ENCODE measurements at regions of chr15 and their contacts with region 1.

Region 1: DNA sequence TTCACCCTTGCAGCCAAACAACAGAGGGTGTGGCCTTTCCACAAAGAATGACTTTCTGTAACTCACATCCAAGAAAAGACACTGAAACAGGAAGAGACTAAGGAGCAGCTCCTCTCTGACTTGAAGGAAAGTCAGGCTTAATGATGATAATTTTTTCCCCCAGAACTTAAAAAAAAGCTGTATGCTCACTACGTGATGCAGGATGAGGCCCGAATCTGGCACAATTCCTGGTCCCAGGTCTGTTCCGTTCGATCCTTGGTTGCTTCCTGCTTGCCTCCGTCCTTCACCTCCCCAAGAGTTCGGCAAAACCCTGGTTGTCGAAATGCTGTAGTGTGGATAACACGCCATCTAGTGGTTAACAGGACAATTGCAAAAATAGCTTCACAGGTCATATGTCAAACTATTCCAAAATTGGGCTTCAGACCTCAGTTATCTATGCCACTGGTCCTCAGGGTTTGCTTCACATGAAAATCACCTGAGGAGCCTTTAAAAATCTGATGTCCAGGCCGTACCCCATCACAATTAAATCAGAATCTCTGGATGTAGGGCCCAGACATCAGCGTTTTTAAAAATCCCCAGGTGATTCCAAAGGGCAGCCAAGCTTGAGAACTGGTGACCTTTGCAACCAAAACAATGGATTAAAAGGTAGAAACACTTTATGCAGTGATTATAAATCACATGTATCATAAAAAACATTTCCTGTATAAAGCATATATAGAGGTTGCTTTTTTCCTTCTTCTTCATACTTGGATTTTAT is 28.1 kb upstream of the SYNM start:
- DNase-seq: peak; percentile 74
- ATAC-seq: peak; percentile 90
- H3K4me3 ChIP-seq: peak overlapping the region; percentile 46
- H3K27ac ChIP-seq: peak overlapping the region; percentile 47
- H3K4me1 ChIP-seq: peaks cover 7% of the 10 kb centered on the region
- H3K27me3 ChIP-seq: no peaks in the 10 kb centered on the region
- CTCF ChIP-seq: peak; percentile 82 to 94 (median 93)
- EP300 ChIP-seq: no peak
- POLR2A ChIP-seq: no peak
- RAD21 ChIP-seq: peak; percentile 99

Region 2: DNA sequence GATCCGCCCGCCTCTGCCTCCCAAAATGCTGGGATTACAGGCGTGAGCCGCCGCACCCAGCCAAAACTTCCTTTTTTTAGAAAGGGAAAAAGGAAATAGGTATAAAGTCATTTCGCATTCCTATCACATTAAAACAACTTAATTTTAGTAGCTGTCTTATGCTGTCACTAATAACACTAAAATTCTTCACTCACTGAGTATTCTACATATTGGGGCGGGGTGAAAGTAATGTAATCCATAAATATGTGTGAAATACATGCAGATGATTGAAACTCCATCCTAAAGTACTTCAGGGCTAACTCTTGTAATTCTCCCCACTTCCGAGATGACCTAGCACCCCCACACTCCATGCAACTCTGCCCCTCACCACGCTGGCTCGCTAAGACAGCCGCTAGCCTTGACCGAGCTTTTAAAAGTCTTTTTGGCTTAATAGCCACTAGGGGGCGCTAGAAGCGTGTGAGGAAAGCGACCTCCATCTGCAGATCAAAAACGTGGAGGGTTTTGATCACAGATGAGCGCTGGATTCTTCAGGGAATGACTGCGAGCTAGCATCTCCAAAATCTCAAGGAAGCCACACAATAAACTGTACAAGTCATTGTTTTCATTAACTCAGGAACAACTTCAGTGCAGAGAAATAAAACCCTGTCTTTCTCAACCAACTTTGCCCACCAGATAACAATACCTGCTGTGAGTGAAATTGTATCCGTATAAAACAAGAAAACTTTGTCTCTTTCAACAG is 557.7 kb before region 1 on chr15:
- CTCF ChIA-PET with region 1: interaction called, 55 read pairs
- POLR2A ChIA-PET with region 1: no interaction called
- RAD21 ChIA-PET with region 1: interaction called, 18 read pairs
- SMC1A ChIA-PET with region 1: interaction called, 32 read pairs
- in situ Hi-C with region 1: no loop called
- intact Hi-C with region 1: loop called (anchors 1 kb)
- DNase-seq: no peak
- ATAC-seq: peak; percentile 95
- H3K4me3 ChIP-seq: no peak overlapping the region
- H3K27ac ChIP-seq: no peak overlapping the region
- H3K4me1 ChIP-seq: no peaks in the 10 kb centered on the region
- H3K27me3 ChIP-seq: no peaks in the 10 kb centered on the region
- CTCF ChIP-seq: peak; percentile 64 to 75 (median 68)
- EP300 ChIP-seq: no peak
- POLR2A ChIP-seq: no peak
- RAD21 ChIP-seq: peak; percentile 75

Region 3: DNA sequence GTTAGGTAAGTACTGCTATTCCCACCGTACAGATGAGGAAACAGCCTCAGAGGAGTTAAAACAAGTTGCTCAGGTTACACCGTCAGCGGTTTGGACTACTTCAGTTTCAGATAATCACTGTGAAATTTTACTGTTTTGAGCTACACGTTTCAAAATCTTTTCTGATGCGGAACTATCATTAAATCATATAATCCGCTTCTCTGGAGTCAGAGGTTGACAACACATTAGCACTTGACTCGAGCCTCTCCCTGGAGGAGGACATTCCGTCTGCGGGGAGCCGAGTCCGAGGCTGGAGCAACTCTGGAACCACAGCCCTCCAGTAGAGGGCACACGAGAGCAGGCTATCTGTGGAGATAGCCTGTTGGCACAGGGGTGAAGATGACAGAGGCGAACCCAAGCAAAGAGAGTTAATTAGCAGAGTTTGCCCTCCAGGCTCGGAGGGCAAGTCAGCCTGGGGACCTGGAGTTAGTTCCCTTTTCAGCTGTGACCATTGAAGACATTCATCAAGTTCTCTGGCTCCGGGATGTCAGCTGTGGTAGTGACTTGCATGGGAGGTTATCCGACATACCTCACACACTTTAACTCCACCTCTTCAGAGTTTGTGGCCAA is 297.2 kb before region 1 on chr15:
- CTCF ChIA-PET with region 1: interaction called, 119 read pairs
- POLR2A ChIA-PET with region 1: no interaction called
- RAD21 ChIA-PET with region 1: interaction called, 53 read pairs
- SMC1A ChIA-PET with region 1: interaction called, 40 read pairs
- in situ Hi-C with region 1: loop called (anchors 5 kb)
- intact Hi-C with region 1: loop called (anchors 1 kb)
- DNase-seq: peak; percentile 41
- ATAC-seq: peak; percentile 89
- H3K4me3 ChIP-seq: no peak overlapping the region
- H3K27ac ChIP-seq: no peak overlapping the region
- H3K4me1 ChIP-seq: peaks cover 19% of the 10 kb centered on the region
- H3K27me3 ChIP-seq: no peaks in the 10 kb centered on the region
- CTCF ChIP-seq: peak; percentile 80 to 99 (median 96)
- EP300 ChIP-seq: no peak
- POLR2A ChIP-seq: no peak
- RAD21 ChIP-seq: peak; percentile 84

Region 4: DNA sequence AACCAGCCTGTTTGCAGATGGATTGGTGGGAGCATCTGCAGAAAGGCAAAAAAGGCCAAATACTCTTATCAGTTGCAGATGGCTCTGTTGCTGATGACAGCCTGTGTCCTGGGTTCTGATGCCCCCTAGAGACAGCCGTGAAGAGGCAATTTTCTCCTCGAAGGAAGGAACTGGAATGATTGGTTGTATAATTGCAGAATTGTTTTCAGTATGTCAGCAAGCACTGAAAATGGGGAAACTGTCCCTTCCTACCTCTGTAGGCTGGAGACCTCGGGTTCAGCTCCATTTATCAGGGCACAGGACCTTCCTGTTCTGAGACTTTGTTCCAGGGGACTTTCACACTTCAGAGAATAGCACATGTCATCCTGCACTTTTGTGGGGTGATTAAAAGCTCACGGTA is 172.2 kb before region 1 on chr15:
- CTCF ChIA-PET with region 1: interaction called, 7 read pairs
- POLR2A ChIA-PET with region 1: no interaction called
- RAD21 ChIA-PET with region 1: interaction called, 4 read pairs
- SMC1A ChIA-PET with region 1: interaction called, 4 read pairs
- in situ Hi-C with region 1: no loop called
- intact Hi-C with region 1: loop called (anchors 1 kb)
- DNase-seq: no peak
- ATAC-seq: peak; percentile 82
- H3K4me3 ChIP-seq: no peak overlapping the region
- H3K27ac ChIP-seq: no peak overlapping the region
- H3K4me1 ChIP-seq: no peaks in the 10 kb centered on the region; the same call in 1 of the 2 replicates
- H3K27me3 ChIP-seq: no peaks in the 10 kb centered on the region
- CTCF ChIP-seq: peak; percentile 55 to 63 (median 62)
- EP300 ChIP-seq: no peak
- POLR2A ChIP-seq: no peak
- RAD21 ChIP-seq: peak; percentile 51

Region 5: GRCh38 chr15:99059010-99059981 is 17.4 kb before region 1 on chr15:
- CTCF ChIA-PET with region 1: interaction called, 52 read pairs
- POLR2A ChIA-PET with region 1: interaction called, 5 read pairs
- RAD21 ChIA-PET with region 1: interaction called, 45 read pairs
- SMC1A ChIA-PET with region 1: interaction called, 86 read pairs
- in situ Hi-C with region 1: no loop called
- intact Hi-C with region 1: no loop called
- DNase-seq: no peak
- ATAC-seq: peak; percentile 85
- H3K4me3 ChIP-seq: peak overlapping the region; percentile 69; the same call in 1 of the 2 replicates
- H3K27ac ChIP-seq: peak overlapping the region; percentile 43
- H3K4me1 ChIP-seq: peaks cover 16% of the 10 kb centered on the region
- H3K27me3 ChIP-seq: no peaks in the 10 kb centered on the region
- CTCF ChIP-seq: peak; percentile 57 to 71 (median 67); a peak in 5 of 6 replicates
- EP300 ChIP-seq: no peak
- POLR2A ChIP-seq: no peak
- RAD21 ChIP-seq: peak; percentile 81

Region 6: DNA sequence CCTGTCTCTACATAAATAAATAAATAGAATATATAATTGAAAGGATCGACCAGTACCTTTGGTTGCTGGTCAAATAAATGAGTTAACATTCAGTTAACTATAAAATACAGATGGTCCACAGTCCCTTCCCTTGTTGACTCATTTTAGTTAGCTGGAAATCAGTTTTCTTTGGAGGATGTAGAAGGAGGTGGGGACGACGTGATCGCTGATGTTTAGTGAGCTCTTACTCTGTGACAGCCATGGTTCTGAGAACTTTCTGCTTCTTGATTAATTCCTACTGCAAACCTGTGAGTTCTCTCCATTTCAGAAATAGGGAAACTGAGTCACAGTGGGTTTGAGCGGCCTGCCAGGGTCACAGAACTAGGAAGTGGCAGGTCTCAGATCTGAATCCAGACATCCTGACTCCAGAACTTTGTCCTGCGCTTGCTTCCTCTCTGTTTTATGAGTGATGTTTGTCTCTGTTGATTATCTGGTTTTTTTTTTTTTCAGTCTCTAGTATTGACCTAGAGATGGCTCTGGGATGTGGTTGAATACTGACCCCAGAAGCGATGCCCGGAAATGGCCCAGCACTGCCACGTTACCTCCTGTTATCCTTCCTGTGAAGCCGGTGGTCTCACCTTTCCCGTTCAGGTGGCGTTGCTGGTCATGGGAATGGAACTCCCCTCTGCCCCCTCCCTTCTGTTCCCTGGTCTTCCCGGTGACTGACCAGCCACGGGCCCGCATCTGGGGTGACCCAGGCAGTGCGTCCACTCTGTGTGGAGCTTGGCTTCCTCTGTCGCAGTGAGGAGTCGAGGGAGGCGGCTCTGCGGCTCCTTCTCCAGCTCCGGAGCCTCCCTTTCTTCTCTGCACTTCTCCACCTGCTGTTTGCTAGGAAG is 46.3 kb after region 1 on chr15:
- CTCF ChIA-PET with region 1: no interaction called
- POLR2A ChIA-PET with region 1: no interaction called
- RAD21 ChIA-PET with region 1: no interaction called
- SMC1A ChIA-PET with region 1: no interaction called
- in situ Hi-C with region 1: no loop called
- intact Hi-C with region 1: no loop called
- DNase-seq: no peak
- ATAC-seq: no peak
- H3K4me3 ChIP-seq: no peak overlapping the region
- H3K27ac ChIP-seq: no peak overlapping the region
- H3K4me1 ChIP-seq: no peaks in the 10 kb centered on the region
- H3K27me3 ChIP-seq: peaks cover 0 to under 1% of the 10 kb centered on the region in 2 experiments; a peak in 1 of 4 replicates
- CTCF ChIP-seq: no peak
- EP300 ChIP-seq: no peak
- POLR2A ChIP-seq: no peak
- RAD21 ChIP-seq: no peak

Region 7: GRCh38 chr15:99213187-99213811 is 136.6 kb after region 1 on chr15:
- CTCF ChIA-PET with region 1: interaction called, 12 read pairs
- POLR2A ChIA-PET with region 1: no interaction called
- RAD21 ChIA-PET with region 1: interaction called, 5 read pairs
- SMC1A ChIA-PET with region 1: interaction called, 4 read pairs
- in situ Hi-C with region 1: no loop called
- intact Hi-C with region 1: no loop called
- DNase-seq: peak; percentile 4
- ATAC-seq: peak; percentile 93
- H3K4me3 ChIP-seq: no peak overlapping the region
- H3K27ac ChIP-seq: no peak overlapping the region
- H3K4me1 ChIP-seq: no peaks in the 10 kb centered on the region
- H3K27me3 ChIP-seq: no peaks in the 10 kb centered on the region
- CTCF ChIP-seq: peak; percentile 83 to 92 (median 85)
- EP300 ChIP-seq: no peak
- POLR2A ChIP-seq: no peak
- RAD21 ChIP-seq: peak; percentile 94